Esophagus muscularis mucosa (tissue), 4 donors: ENCODE measurements at regions of chr4 and their contacts with region 1.

Region 1: GRCh38 chr4:99383833-99384392 is 31.4 kb upstream of the ADH1C start:
- DNase-seq: no peak
- H3K4me3 ChIP-seq: no peak overlapping the region
- H3K27ac ChIP-seq: peak overlapping the region; percentile 78 to 85 (median 80)
- H3K4me1 ChIP-seq: peaks cover 0 to 58% (median 34%) of the 10 kb centered on the region in 4 donors
- H3K27me3 ChIP-seq: no peaks in the 10 kb centered on the region
- CTCF ChIP-seq: no peak
- EP300 ChIP-seq: no peak
- POLR2A ChIP-seq: no peak

Region 2: DNA sequence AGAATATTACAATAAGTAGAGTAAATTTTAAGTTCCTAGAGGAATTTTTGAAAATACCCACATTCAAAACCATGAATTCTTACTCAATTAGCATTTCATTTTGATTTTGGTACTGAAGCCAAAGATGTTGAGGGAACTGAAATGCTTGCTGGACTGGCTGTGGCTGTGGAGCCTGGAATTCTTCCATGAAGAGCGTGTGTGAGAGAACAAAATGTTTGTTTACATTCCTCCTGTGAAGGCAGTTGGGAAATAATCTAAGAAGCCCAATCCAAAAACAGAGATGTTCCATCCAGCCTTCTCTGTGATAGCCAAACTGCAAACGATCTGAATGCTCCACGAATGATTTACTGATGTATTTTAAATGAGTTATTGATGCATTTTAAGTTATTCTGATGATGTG is 58.9 kb before region 1 on chr4:
- intact Hi-C with region 1: loop called (anchors 5 kb)
- DNase-seq: no peak
- H3K4me3 ChIP-seq: no peak overlapping the region
- H3K27ac ChIP-seq: peak overlapping the region; percentile 79 to 85 (median 83)
- H3K4me1 ChIP-seq: peaks cover 18 to 53% (median 40%) of the 10 kb centered on the region in 4 donors
- H3K27me3 ChIP-seq: no peaks in the 10 kb centered on the region
- CTCF ChIP-seq: no peak
- EP300 ChIP-seq: peak; percentile 79
- POLR2A ChIP-seq: no peak

Region 3: DNA sequence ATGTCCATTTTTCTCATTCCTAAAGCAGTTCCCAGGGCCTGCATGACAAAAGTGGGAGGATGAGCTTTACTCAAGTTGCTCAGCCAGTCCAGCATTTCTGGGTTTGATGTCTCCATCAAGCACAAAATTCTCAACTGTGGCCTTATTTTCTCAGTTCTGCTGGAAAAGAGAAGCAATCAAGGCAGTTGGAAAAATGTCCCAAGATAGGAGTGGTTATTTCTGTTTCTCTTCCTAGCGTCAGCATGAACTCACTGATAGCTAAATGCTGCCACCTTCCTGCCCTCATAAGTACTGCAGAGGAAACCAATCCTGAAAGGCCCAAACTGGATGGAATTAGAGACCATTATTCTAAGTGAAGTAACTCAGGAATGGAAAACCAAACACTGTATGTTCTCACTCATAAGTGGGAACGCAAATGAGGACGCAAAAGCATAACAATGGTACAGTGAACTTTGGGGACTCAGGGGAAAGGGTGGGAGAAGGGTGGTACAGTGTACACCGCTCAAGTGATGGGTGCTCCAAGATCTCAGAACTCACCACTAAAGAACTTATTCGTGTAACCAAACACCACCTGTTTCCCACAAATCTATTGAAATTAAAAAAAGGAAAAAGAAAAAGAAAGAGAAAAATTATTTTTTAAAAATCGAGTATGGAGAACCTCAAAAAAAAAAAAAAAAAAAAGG is 21.7 kb after region 1 on chr4:
- intact Hi-C with region 1: no loop called
- DNase-seq: no peak
- H3K4me3 ChIP-seq: peak overlapping the region in 1 of 4 donors; percentile 19
- H3K27ac ChIP-seq: peak overlapping the region; percentile 58 to 74 (median 70)
- H3K4me1 ChIP-seq: peaks cover 19 to 75% (median 63%) of the 10 kb centered on the region in 4 donors
- H3K27me3 ChIP-seq: no peaks in the 10 kb centered on the region
- CTCF ChIP-seq: peak; percentile 90 to 96 (median 95)
- EP300 ChIP-seq: no peak
- POLR2A ChIP-seq: no peak